CD8-positive, alpha-beta T cell (primary cell): ENCODE measurements at regions of chr19 and their contacts with region 1.

Region 1: GRCh38 chr19:40603389-40604135 is 2.4 kb downstream of the LTBP4 start:
- DNase-seq: peak; percentile 92 to 98 (median 96)
- ATAC-seq: peak; percentile 73
- H3K4me3 ChIP-seq: peak overlapping the region; percentile 54 to 58
- H3K4me3 Mint-ChIP-seq: peak overlapping the region; percentile 89
- H3K27ac ChIP-seq: peak overlapping the region in 1 of 2 experiments; percentile 39
- H3K27ac Mint-ChIP-seq: peak overlapping the region; percentile 76
- H3K4me1 ChIP-seq: peaks cover 73% of the 10 kb centered on the region
- H3K4me1 Mint-ChIP-seq: peaks cover 66% of the 10 kb centered on the region
- H3K27me3 ChIP-seq: peaks cover 23 to 34% of the 10 kb centered on the region in 2 experiments
- H3K27me3 Mint-ChIP-seq: peaks cover 20% of the 10 kb centered on the region
- CTCF ChIP-seq: no peak

Region 2: DNA sequence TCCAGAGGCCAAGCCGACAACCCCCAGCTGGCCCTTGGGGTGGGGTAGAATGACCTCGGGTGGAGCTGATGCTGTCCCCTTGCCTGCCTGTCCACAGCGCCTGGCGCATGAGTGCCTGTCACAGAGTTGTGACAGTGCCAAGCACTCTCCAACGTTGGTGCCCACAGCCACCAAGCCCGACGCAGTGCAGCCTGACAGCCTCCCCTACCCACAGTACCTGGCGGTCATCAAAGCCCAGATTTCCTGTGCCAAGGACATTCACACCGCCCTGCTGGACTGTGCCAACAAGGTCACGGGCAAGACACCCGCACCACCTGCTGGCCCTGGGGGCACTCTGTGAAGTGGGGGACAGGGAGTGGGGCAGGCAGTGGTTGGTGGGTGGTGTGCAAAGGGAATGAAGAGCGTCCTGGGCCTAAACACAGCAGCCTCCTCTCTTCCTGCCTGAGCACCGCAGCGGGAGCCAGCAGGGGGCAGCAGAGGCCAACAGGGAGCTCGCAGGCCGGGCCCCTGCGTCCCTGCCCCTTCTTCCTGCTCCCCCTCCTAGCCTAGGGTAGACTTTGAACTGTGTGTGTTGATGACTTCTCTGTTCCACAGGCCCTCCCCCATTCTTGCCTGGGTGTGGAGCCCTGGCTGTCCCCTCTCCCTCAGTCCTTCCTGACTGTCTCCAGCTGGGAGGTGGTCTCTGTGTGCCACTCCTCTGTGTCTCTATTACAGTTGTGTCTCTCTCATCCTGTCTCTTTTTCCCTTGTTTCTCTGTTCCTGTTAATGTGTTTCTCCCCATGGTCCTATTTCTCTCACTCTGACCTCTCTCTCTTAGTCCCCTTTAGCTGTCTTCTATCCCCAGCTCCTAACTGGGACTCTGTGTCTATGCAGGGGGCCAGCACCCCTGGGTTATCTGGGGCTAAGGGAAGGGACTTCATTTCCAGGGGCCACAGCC is 1205.9 kb before region 1 on chr19:
- CTCF ChIA-PET with region 1: interaction called, 3 read pairs
- POLR2A ChIA-PET with region 1: no interaction called
- intact Hi-C with region 1: loop called (anchors 10 kb)
- DNase-seq: peak; percentile 88 to 98 (median 94)
- ATAC-seq: peak; percentile 41
- H3K4me3 ChIP-seq: peak overlapping the region; percentile 12 to 18
- H3K4me3 Mint-ChIP-seq: peak overlapping the region; percentile 71
- H3K27ac ChIP-seq: peak overlapping the region; percentile 33 to 92
- H3K27ac Mint-ChIP-seq: peak overlapping the region; percentile 96
- H3K4me1 ChIP-seq: peaks cover 51% of the 10 kb centered on the region
- H3K4me1 Mint-ChIP-seq: peaks cover 56% of the 10 kb centered on the region
- H3K27me3 ChIP-seq: no peaks in the 10 kb centered on the region
- H3K27me3 Mint-ChIP-seq: no peaks in the 10 kb centered on the region
- CTCF ChIP-seq: peak; percentile 94

Region 3: GRCh38 chr19:40549007-40549708 is 54.4 kb before region 1 on chr19:
- CTCF ChIA-PET with region 1: interaction called, 40 read pairs
- POLR2A ChIA-PET with region 1: no interaction called
- intact Hi-C with region 1: loop called (anchors 1 kb)
- DNase-seq: peak; percentile 44 to 82 (median 74)
- ATAC-seq: peak; percentile 92
- H3K4me3 ChIP-seq: no peak overlapping the region
- H3K4me3 Mint-ChIP-seq: peak overlapping the region; percentile 22
- H3K27ac ChIP-seq: no peak overlapping the region
- H3K27ac Mint-ChIP-seq: no peak overlapping the region
- H3K4me1 ChIP-seq: peaks cover 4% of the 10 kb centered on the region
- H3K4me1 Mint-ChIP-seq: peaks cover 9% of the 10 kb centered on the region
- H3K27me3 ChIP-seq: peaks cover 16 to 26% of the 10 kb centered on the region in 2 experiments
- H3K27me3 Mint-ChIP-seq: peaks cover 57% of the 10 kb centered on the region
- CTCF ChIP-seq: peak; percentile 55

Region 4: GRCh38 chr19:40633207-40633606 is 29.6 kb after region 1 on chr19:
- CTCF ChIA-PET with region 1: interaction called, 33 read pairs
- POLR2A ChIA-PET with region 1: no interaction called
- intact Hi-C with region 1: loop called in 1 of 2 experiments (anchors 1 kb)
- DNase-seq: no peak
- ATAC-seq: no peak
- H3K4me3 ChIP-seq: no peak overlapping the region
- H3K4me3 Mint-ChIP-seq: no peak overlapping the region
- H3K27ac ChIP-seq: no peak overlapping the region
- H3K27ac Mint-ChIP-seq: no peak overlapping the region
- H3K4me1 ChIP-seq: peaks cover 4% of the 10 kb centered on the region
- H3K4me1 Mint-ChIP-seq: peaks cover 12% of the 10 kb centered on the region
- H3K27me3 ChIP-seq: peaks cover 0 to 3% of the 10 kb centered on the region in 2 experiments
- H3K27me3 Mint-ChIP-seq: peaks cover 5% of the 10 kb centered on the region
- CTCF ChIP-seq: no peak

Region 5: GRCh38 chr19:40716655-40717324 is 113.2 kb after region 1 on chr19 and contains the starts of genes COQ8B and ITPKC:
- CTCF ChIA-PET with region 1: no interaction called
- POLR2A ChIA-PET with region 1: no interaction called
- intact Hi-C with region 1: loop called in 1 of 2 experiments (anchors 2 kb)
- DNase-seq: peak; percentile 98 to 100 (median 100)
- ATAC-seq: peak; percentile 74
- H3K4me3 ChIP-seq: peak within 1 kb of the TSS; percentile 66 to 93
- H3K4me3 Mint-ChIP-seq: peak within 1 kb of the TSS; percentile 88
- H3K27ac ChIP-seq: peak within 1 kb of the TSS; percentile 88 to 89
- H3K27ac Mint-ChIP-seq: peak within 1 kb of the TSS; percentile 97
- H3K4me1 ChIP-seq: peaks cover 61% of the 10 kb centered on the region
- H3K4me1 Mint-ChIP-seq: peaks cover 70% of the 10 kb centered on the region
- H3K27me3 ChIP-seq: no peaks in the 10 kb centered on the region
- H3K27me3 Mint-ChIP-seq: no peaks in the 10 kb centered on the region
- CTCF ChIP-seq: no peak
- total RNA-seq, gene COQ8B: 14.0 to 14.2 TPM
- total RNA-seq, gene ITPKC: 5.9 to 6.4 TPM